Psoas muscle (tissue), 8 donors: ENCODE measurements at regions of chr2 and their contacts with region 1.

Region 1: GRCh38 chr2:219294356-219295351 is 14.5 kb downstream of the PTPRN start:
- DNase-seq: peak; percentile 86 to 93
- ATAC-seq: peak; percentile 92 to 97 (median 94)
- H3K4me3 ChIP-seq: peak overlapping the region; percentile 71
- H3K27ac ChIP-seq: peak overlapping the region; percentile 84
- H3K4me1 ChIP-seq: peaks cover 4% of the 10 kb centered on the region
- H3K27me3 ChIP-seq: peaks cover 0 to under 1% (median 0%) of the 10 kb centered on the region in 3 donors
- CTCF ChIP-seq: peak; percentile 99

Region 2: DNA sequence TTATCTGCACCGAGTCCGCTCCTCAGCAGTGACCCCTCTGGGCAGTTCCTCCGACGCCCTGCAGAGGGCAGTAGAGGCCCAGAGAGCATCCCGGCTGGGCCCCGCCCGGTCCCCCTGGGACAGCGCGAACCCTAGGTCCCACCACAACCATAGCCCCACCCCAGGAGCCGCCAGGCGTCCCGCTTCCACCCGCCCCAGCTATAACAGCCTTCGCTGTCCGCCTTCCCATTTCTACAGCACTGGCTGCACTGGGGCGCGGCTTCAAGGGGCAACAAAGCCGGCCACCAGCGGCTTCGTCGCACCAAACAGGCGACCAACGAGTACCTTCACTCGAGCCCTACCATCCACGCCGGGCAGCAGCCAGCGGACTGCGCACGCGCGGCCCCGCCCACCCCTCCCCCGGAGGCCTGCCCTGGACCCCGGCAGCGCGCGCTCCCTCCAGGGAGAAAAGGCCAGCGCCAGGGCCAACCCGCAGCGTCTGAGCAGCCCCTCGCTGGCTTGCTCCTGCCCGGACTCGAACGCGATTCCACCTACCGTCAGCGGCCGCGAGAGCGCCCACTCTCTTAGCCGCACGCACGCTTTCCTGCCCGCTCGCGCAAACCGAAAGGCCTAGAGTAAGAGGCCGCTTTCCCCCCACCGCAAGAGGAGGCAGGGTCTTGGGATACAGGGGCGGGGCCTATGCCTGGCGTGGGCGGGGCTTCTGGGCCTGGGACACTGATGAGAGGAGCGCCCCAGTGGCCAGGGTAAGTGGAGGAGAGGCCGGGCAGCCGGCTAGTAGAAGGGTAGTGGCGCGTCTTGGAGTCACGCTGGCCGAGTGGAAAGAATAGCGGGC is 134.3 kb before region 1 on chr2 and contains the start of gene NHEJ1:
- intact Hi-C with region 1: loop called (anchors 1 to 5 kb)
- DNase-seq: peak; percentile 98 to 99
- ATAC-seq: peak; percentile 95 to 97 (median 96)
- H3K4me3 ChIP-seq: peak within 1 kb of the TSS; percentile 86
- H3K27ac ChIP-seq: peak within 1 kb of the TSS; percentile 93
- H3K4me1 ChIP-seq: peaks cover 5% of the 10 kb centered on the region
- H3K27me3 ChIP-seq: no peaks in the 10 kb centered on the region
- CTCF ChIP-seq: peak; percentile 99
- total RNA-seq, gene NHEJ1: 11.5 to 18.5 (median 13.4) TPM

Region 3: GRCh38 chr2:219245148-219245898 is 49.3 kb before region 1 on chr2 and contains the starts of genes GLB1L and STK16:
- intact Hi-C with region 1: loop called in 1 of 2 experiments (anchors 10 kb)
- DNase-seq: peak; percentile 96 to 97
- ATAC-seq: peak; percentile 86 to 95 (median 92)
- H3K4me3 ChIP-seq: peak within 1 kb of the TSS; percentile 95
- H3K27ac ChIP-seq: peak within 1 kb of the TSS; percentile 94
- H3K4me1 ChIP-seq: peaks cover 39% of the 10 kb centered on the region
- H3K27me3 ChIP-seq: no peaks in the 10 kb centered on the region
- CTCF ChIP-seq: no peak
- total RNA-seq, gene GLB1L: 0.59 to 1.6 (median 0.92) TPM
- total RNA-seq, gene STK16: 11.6 to 16.7 (median 14.3) TPM

Region 4: DNA sequence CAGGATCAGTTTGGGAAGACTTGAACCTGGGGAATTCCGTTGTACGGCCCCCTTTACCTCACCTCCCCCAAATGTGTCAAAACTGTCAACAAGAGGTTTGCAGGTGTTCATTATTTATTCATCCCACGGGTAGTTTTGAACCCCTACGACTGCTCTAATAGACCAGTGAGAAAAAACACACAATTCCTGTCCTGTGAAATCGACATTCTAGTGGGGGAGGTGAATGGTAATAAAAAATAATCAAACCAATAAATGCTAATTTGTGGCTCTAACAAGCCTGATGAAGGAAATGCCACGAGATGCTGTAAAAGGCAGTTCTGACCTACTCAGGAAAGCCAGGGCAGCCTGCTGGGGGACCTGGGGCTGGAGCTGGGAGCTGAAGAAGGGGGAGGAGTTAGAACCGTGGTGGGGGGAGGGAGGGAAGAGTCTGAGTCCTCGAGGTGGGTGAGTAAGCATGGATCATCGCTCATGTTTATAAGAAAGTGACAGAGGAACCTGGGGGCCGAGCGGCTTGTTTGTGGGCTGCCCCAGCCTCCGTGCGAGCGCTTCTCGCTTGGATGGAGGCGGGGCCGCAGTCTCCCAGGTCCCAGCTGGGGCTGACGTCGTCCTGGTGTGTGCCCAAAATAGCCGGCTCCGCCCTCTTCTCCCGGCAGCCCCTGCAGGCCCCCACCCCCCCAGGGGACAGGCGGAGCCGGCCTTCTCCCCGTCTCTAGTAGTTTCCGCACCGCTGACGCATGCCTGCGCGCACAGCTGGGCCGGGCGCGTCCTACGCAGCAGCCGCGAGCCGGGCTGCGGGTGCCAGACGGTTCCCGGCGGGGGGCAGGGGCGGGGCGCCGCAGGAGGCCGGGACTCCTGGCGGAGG is 15.8 kb before region 1 on chr2 and contains the start of gene DNAJB2:
- intact Hi-C with region 1: loop called in 1 of 2 experiments (anchors 1 kb)
- DNase-seq: peak; percentile 99 to 100
- ATAC-seq: peak; percentile 91 to 93 (median 92)
- H3K4me3 ChIP-seq: peak within 1 kb of the TSS; percentile 92
- H3K27ac ChIP-seq: peak within 1 kb of the TSS; percentile 98
- H3K4me1 ChIP-seq: peaks cover 30% of the 10 kb centered on the region
- H3K27me3 ChIP-seq: no peaks in the 10 kb centered on the region
- CTCF ChIP-seq: no peak
- total RNA-seq, gene DNAJB2: 93.1 to 173 (median 117) TPM

Region 5: GRCh38 chr2:219331560-219332213 is 37.0 kb after region 1 on chr2:
- intact Hi-C with region 1: no loop called
- DNase-seq: peak; percentile 35 to 64
- ATAC-seq: peak in 3 of 4 donors; percentile 61 to 78 (median 75)
- H3K4me3 ChIP-seq: no peak overlapping the region
- H3K27ac ChIP-seq: no peak overlapping the region
- H3K4me1 ChIP-seq: no peaks in the 10 kb centered on the region
- H3K27me3 ChIP-seq: peaks cover 12 to 35% (median 13%) of the 10 kb centered on the region in 3 donors
- CTCF ChIP-seq: no peak